Ascending aorta (tissue), 2 donors: ENCODE measurements at regions of chr2 and their contacts with region 1.

Region 1: DNA sequence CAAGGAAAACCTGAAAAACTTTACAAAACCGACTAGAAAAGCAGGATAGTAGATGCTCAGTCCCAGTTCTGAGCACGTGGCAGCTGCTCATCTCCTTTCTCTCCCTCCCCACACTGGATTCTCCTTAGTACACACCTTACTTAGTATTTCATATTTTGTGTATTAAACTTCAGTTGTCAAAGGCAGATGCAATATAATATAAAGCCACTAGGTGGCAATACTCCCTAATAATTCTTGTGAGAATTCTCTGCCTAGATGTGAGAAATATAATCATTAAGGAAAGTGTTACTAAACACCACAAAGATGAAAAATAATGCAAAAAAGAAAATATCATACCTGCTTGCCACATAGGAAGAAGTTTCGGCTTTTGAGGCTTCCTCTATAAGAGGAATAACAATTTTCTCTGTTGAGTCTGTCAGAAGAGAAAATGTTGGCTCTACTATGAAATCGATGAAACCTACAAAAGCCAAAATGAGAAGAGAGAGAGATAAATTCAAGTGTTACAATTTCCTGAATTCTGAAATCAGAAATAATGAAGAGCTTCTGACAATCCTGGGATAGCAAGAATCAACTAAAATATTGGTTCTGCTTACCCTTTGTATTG is 200.6 kb downstream of the PPP1R1C start:
- DNase-seq: no peak
- H3K4me3 ChIP-seq: no peak overlapping the region
- H3K27ac ChIP-seq: no peak overlapping the region
- H3K4me1 ChIP-seq: no peaks in the 10 kb centered on the region
- H3K27me3 ChIP-seq: no peaks in the 10 kb centered on the region
- CTCF ChIP-seq: peak; percentile 68 to 83 (median 79)

Region 2: DNA sequence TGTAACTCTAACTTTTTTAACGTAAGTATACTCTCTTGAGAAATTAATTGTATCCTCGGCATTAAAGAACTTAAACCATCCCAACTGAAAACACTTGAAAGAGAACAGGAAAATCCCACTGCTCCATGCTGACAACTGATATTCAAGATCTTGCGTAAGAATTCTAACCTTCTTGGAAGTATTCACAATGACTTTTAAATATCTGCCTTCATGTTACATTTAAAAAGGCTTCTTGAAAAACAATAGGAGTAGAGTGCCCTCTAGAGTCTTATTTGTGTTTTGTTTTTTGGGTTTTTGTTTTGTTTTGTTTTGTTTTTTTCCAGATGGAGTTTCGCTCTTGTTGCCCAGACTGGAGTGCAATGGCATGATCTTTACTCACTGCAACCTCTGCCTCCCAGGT is 464.5 kb after region 1 on chr2:
- intact Hi-C with region 1: loop called (anchors 1 kb)
- DNase-seq: no peak
- H3K4me3 ChIP-seq: peak overlapping the region in 1 of 2 donors; percentile 15
- H3K27ac ChIP-seq: no peak overlapping the region
- H3K4me1 ChIP-seq: peaks cover 0 to 2% of the 10 kb centered on the region in 2 donors
- H3K27me3 ChIP-seq: no peaks in the 10 kb centered on the region
- CTCF ChIP-seq: peak; percentile 35 to 62 (median 38)